Stomach (tissue), 19 donors: ENCODE measurements at regions of chr10 and their contacts with region 1.

Region 1: DNA sequence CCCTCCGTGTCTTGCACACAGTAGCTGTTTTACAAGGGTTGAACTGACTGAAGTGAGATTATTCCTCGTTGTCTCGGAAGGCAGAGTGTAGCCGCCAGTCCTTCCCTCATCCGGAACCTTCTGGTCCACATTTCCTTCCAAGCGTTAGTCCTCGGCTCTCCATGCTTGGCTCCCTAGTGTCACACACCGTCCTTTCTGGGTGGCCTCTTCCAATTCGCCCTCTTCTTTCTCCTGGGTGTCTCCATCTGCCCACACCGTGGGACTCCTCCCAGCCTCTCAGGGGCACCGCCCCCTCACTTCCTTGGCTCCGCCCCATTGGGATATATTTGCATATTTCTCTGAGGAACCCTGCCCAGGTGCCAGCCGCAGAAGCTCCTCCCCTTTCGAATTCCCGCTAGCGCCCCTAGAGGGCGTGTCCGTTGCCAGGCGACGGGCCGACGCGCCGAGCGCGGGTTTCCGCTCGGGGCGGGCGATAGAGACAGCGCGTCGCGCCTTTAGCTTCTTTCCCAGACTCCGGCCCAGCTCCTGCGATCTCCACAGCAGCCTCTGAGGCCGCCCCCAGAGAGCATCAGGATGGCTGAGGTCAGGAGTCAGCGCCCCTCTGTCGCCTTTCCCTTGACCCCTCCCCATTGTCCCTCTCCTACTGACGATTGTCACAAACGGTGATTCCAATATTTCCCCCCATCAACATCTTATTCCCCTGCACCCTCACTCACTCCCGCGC is at the start of gene CFAP58:
- DNase-seq: peak; percentile 96
- H3K4me3 ChIP-seq: peak within 1 kb of the TSS; percentile 37 to 50 (median 42)
- H3K27ac ChIP-seq: peak within 1 kb of the TSS in 4 of 5 donors; percentile 41 to 57 (median 48)
- H3K4me1 ChIP-seq: peaks cover 18 to 55% (median 38%) of the 10 kb centered on the region in 4 donors
- H3K27me3 ChIP-seq: no peaks in the 10 kb centered on the region
- CTCF ChIP-seq: peak in 4 of 7 experiments; percentile 71 to 84 (median 75)
- EP300 ChIP-seq: no peak
- POLR2A ChIP-seq: no peak
- total RNA-seq, gene CFAP58: 0.18 to 0.58 TPM in 2 of 5 donors, not detected in the others

Region 2: GRCh38 chr10:104291439-104291951 is 62.0 kb before region 1 on chr10:
- intact Hi-C with region 1: loop called (anchors 5 kb)
- DNase-seq: peak; percentile 93 to 96
- H3K4me3 ChIP-seq: no peak overlapping the region
- H3K27ac ChIP-seq: no peak overlapping the region
- H3K4me1 ChIP-seq: peaks cover 0 to 13% (median 4%) of the 10 kb centered on the region in 4 donors
- H3K27me3 ChIP-seq: no peaks in the 10 kb centered on the region
- CTCF ChIP-seq: peak in 6 of 7 experiments; percentile 16 to 100 (median 99)
- EP300 ChIP-seq: no peak
- POLR2A ChIP-seq: no peak

Region 3: DNA sequence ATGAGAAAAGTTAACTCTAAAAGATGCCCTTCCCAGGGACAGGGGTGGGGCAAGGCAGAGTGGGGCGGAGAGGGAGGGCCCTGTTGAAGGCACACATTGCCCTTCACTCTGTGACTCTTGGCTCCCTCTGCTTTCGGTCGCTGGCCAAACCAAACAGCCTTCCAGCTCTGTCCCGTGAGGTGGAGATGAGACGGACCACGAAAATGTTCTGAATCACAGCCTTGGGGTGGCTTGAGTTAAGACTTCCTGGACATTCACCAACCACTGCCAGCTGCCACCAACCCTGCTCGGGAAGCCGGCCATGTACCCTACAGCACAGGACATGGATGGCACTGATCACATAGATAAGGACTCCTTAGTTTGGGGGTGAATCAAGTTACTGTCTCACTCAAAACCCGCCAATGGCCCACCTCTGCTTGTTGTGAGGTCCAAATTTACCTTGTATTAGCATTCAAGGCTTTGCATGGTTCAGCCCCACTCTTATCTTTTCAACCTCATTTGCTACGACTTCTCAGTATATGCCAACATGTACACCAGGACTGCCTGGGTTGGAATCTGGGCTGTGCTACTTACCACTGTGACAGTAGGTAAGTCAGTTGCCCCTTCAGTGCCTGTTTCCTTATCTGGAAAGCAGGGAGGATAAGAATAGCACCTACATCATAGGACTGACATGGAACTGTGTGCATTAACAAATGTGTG is 43.4 kb before region 1 on chr10:
- intact Hi-C with region 1: loop called (anchors 5 kb)
- DNase-seq: peak in 1 of 2 donors; percentile 66
- H3K4me3 ChIP-seq: no peak overlapping the region
- H3K27ac ChIP-seq: peak overlapping the region; percentile 4 to 51 (median 11)
- H3K4me1 ChIP-seq: peaks cover 6 to 35% (median 19%) of the 10 kb centered on the region in 4 donors
- H3K27me3 ChIP-seq: no peaks in the 10 kb centered on the region
- CTCF ChIP-seq: no peak
- EP300 ChIP-seq: no peak
- POLR2A ChIP-seq: no peak